ENCODE measurements at regions of chr7 and their contacts with region 1.

Region 1: GRCh38 chr7:43590862-43591550 is 8.1 kb downstream of the STK17A start:
- DNase-seq: peak; percentile 68
- H3K4me3 Mint-ChIP-seq: peak overlapping the region; percentile 28
- H3K27ac Mint-ChIP-seq: peak overlapping the region; percentile 75
- H3K4me1 Mint-ChIP-seq: peaks cover 83% of the 10 kb centered on the region
- H3K27me3 Mint-ChIP-seq: no peaks in the 10 kb centered on the region

Region 2: GRCh38 chr7:43302211-43302711 is 288.7 kb before region 1 on chr7:
- CTCF ChIA-PET with region 1: no interaction called
- POLR2A ChIA-PET with region 1: no interaction called
- intact Hi-C with region 1: loop called (anchors 10 kb)
- DNase-seq: peak; percentile 64
- H3K4me3 Mint-ChIP-seq: no peak overlapping the region
- H3K27ac Mint-ChIP-seq: no peak overlapping the region
- H3K4me1 Mint-ChIP-seq: peaks cover 31% of the 10 kb centered on the region
- H3K27me3 Mint-ChIP-seq: peaks cover 25% of the 10 kb centered on the region

Region 3: GRCh38 chr7:43531700-43532099 is 59.3 kb before region 1 on chr7:
- CTCF ChIA-PET with region 1: no interaction called
- POLR2A ChIA-PET with region 1: no interaction called
- intact Hi-C with region 1: no loop called
- DNase-seq: no peak
- H3K4me3 Mint-ChIP-seq: no peak overlapping the region
- H3K27ac Mint-ChIP-seq: no peak overlapping the region
- H3K4me1 Mint-ChIP-seq: no peaks in the 10 kb centered on the region
- H3K27me3 Mint-ChIP-seq: peaks cover 3% of the 10 kb centered on the region

Region 4: GRCh38 chr7:43565786-43566185 is 25.2 kb before region 1 on chr7:
- CTCF ChIA-PET with region 1: no interaction called
- POLR2A ChIA-PET with region 1: no interaction called
- intact Hi-C with region 1: no loop called
- DNase-seq: no peak
- H3K4me3 Mint-ChIP-seq: no peak overlapping the region
- H3K27ac Mint-ChIP-seq: no peak overlapping the region
- H3K4me1 Mint-ChIP-seq: peaks cover 13% of the 10 kb centered on the region
- H3K27me3 Mint-ChIP-seq: peaks cover 15% of the 10 kb centered on the region

Region 5: GRCh38 chr7:43612599-43613589 is 21.9 kb after region 1 on chr7:
- CTCF ChIA-PET with region 1: interaction called, 10 read pairs
- POLR2A ChIA-PET with region 1: interaction called, 6 read pairs
- intact Hi-C with region 1: loop called (anchors 1 kb)
- DNase-seq: peak; percentile 33
- H3K4me3 Mint-ChIP-seq: peak overlapping the region; percentile 43
- H3K27ac Mint-ChIP-seq: peak overlapping the region; percentile 83
- H3K4me1 Mint-ChIP-seq: peaks cover 58% of the 10 kb centered on the region
- H3K27me3 Mint-ChIP-seq: no peaks in the 10 kb centered on the region

Region 6: DNA sequence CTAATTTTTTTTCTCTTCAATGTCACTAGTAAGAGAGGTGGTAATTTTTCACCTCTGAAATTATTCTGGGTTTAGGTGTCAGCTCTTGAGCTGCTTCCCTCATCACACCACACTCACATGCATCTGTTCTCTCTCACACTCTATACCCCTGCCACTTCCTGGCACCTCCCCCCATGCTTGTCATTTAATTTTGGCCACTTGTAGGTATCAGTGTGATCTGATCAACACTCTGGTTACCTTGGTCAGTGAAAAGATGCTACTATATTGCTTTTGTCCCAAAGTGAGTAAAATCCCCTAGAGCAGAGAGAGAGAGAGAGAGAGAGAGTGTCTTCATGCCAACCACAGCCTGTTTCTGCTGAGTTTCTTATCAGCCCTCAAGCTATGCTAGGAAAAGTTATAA is 34.4 kb after region 1 on chr7:
- CTCF ChIA-PET with region 1: interaction called, 5 read pairs
- POLR2A ChIA-PET with region 1: interaction called, 11 read pairs
- intact Hi-C with region 1: loop called (anchors 1 kb)
- DNase-seq: peak; percentile 67
- H3K4me3 Mint-ChIP-seq: no peak overlapping the region
- H3K27ac Mint-ChIP-seq: peak overlapping the region; percentile 54
- H3K4me1 Mint-ChIP-seq: peaks cover 84% of the 10 kb centered on the region
- H3K27me3 Mint-ChIP-seq: no peaks in the 10 kb centered on the region

Region 7: GRCh38 chr7:43750016-43750887 is 159.2 kb after region 1 on chr7:
- CTCF ChIA-PET with region 1: no interaction called
- POLR2A ChIA-PET with region 1: no interaction called
- intact Hi-C with region 1: no loop called
- DNase-seq: no peak
- H3K4me3 Mint-ChIP-seq: no peak overlapping the region
- H3K27ac Mint-ChIP-seq: no peak overlapping the region
- H3K4me1 Mint-ChIP-seq: peaks cover 15% of the 10 kb centered on the region
- H3K27me3 Mint-ChIP-seq: peaks cover 10% of the 10 kb centered on the region